ENCODE measurements at regions of chr10 and their contacts with region 1.

Region 1: GRCh38 chr10:99630439-99630838 is 10.2 kb upstream of the SLC25A28 start:
- DNase-seq: peak; percentile 67 to 81 (median 77)
- H3K4me3 ChIP-seq: no peak overlapping the region
- H3K27ac ChIP-seq: no peak overlapping the region
- H3K4me1 ChIP-seq: peaks cover 0 to 6% (median 3%) of the 10 kb centered on the region in 4 experiments
- H3K27me3 ChIP-seq: no peaks in the 10 kb centered on the region

Region 2: GRCh38 chr10:99659031-99659867 is 28.8 kb after region 1 on chr10 and contains the start of gene ENTPD7:
- CTCF ChIA-PET with region 1: interaction called, 11 read pairs
- POLR2A ChIA-PET with region 1: no interaction called
- DNase-seq: peak; percentile 86 to 94 (median 91)
- H3K4me3 ChIP-seq: peak within 1 kb of the TSS; percentile 64 to 95 (median 87)
- H3K27ac ChIP-seq: peak within 1 kb of the TSS; percentile 7 to 73
- H3K4me1 ChIP-seq: peaks cover 9 to 37% (median 20%) of the 10 kb centered on the region in 4 experiments
- H3K27me3 ChIP-seq: no peaks in the 10 kb centered on the region

Region 3: GRCh38 chr10:99700649-99701048 is 70.2 kb after region 1 on chr10:
- CTCF ChIA-PET with region 1: interaction called, 12 read pairs
- POLR2A ChIA-PET with region 1: no interaction called
- DNase-seq: no peak
- H3K4me3 ChIP-seq: no peak overlapping the region
- H3K27ac ChIP-seq: no peak overlapping the region
- H3K4me1 ChIP-seq: no peaks in the 10 kb centered on the region
- H3K27me3 ChIP-seq: no peaks in the 10 kb centered on the region

Region 4: GRCh38 chr10:99711129-99711719 is 80.8 kb after region 1 on chr10:
- CTCF ChIA-PET with region 1: interaction called, 96 read pairs
- POLR2A ChIA-PET with region 1: no interaction called
- DNase-seq: peak; percentile 80 to 92 (median 87)
- H3K4me3 ChIP-seq: no peak overlapping the region
- H3K27ac ChIP-seq: no peak overlapping the region
- H3K4me1 ChIP-seq: peaks cover 0 to 21% (median 11%) of the 10 kb centered on the region in 4 experiments
- H3K27me3 ChIP-seq: no peaks in the 10 kb centered on the region

Measured in common myeloid progenitor, CD34-positive (primary cell).